GM10248 (cell line): ENCODE measurements at regions of chr1 and their contacts with region 1.

Region 1: DNA sequence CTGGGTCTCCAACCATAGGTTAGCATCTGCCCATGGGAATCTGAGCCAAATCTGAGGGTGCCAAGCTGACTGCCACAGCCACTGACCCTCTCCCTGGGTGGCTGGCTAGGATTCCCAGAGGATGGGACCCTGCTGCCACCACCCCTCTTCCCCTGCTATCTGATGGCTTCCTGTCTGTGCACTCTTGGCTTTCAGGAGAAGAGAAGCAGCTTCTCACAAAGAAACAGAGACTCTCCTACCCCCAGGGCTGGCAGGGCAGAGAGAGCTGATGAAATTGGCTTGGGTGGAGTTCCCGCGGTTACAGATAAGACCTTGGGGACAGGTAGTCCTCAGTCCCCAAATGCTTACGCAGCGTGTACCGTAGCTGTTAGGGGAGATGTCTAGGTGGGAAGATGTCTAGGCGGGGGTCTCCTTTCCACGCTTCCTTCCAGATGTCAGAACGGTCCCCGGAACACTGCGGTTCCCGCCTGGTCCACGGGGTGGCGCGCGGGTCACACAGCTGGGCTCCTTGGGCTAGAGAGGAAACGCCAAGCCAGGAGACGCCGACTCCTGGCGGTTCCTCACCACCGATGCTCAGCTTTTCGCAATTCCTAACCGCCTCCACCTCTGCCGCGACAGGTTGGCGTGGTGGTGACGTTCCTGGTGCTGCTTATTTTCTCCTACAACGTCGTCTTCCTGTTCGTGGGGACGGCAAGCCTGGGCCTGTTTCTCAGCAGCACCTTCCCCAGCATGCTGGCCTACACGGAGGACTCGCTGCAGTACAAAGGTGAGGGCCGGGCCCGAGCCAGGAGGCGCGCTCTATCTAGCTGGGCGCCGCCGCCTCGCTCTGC is 40.1 kb downstream of the ELK4 start:
- DNase-seq: peak; percentile 83
- CTCF ChIP-seq: peak; percentile 98

Region 2: GRCh38 chr1:205610036-205610435 is 18.3 kb after region 1 on chr1:
- CTCF ChIA-PET with region 1: interaction called, 38 read pairs
- POLR2A ChIA-PET with region 1: no interaction called
- DNase-seq: no peak
- CTCF ChIP-seq: no peak

Region 3: DNA sequence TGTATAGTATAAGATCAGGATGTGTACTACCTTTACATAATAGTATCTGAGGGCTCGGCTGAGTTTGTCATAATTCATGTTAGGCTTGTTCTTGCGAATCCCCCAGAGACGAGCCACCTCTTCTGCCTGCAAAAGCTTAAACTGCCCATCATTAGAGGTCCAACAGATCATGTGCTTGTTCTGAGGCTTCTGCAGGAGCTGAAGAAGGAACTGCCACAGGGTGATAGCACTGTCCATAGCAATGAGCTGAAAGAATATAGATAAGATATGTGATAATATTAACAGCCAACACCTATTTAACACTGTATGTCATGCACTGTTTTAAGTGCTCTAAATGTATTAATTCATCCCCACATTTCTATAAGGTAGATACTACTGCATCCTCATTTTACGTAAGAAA is 31.9 kb after region 1 on chr1:
- CTCF ChIA-PET with region 1: interaction called, 263 read pairs
- POLR2A ChIA-PET with region 1: interaction called, 3 read pairs
- DNase-seq: no peak
- CTCF ChIP-seq: no peak

Region 4: DNA sequence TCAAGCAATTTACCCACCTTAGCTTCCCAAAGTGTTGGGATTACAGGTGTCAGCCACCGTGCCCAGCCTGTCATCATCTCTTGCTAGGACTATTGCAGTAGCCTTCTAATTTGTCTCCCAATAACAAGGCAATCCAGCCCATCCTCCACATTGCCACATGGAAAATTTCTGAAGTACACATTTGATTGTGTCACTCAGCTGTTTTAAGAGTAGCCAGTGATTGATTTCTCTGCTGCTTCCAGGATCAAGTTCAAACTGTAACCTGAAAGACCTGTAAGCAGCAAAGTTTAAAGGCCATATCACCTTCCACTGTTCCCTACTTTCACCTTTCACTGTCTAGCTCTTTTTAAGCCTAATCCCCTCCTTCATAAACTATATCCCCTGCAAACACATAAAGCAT is 47.8 kb after region 1 on chr1:
- CTCF ChIA-PET with region 1: interaction called, 263 read pairs
- POLR2A ChIA-PET with region 1: no interaction called
- DNase-seq: no peak
- CTCF ChIP-seq: no peak

Region 5: GRCh38 chr1:205668951-205669340 is 77.2 kb after region 1 on chr1:
- CTCF ChIA-PET with region 1: interaction called, 509 read pairs
- POLR2A ChIA-PET with region 1: no interaction called
- DNase-seq: peak; percentile 76
- CTCF ChIP-seq: peak; percentile 24

Region 6: GRCh38 chr1:205711104-205712020 is 119.6 kb after region 1 on chr1:
- CTCF ChIA-PET with region 1: interaction called, 112 read pairs
- POLR2A ChIA-PET with region 1: no interaction called
- DNase-seq: peak; percentile 58
- CTCF ChIP-seq: peak; percentile 83

Region 7: GRCh38 chr1:205849619-205850355 is 258.1 kb after region 1 on chr1 and contains the start of gene PM20D1:
- CTCF ChIA-PET with region 1: no interaction called
- POLR2A ChIA-PET with region 1: no interaction called
- DNase-seq: peak; percentile 65
- CTCF ChIP-seq: no peak